ENCODE measurements at regions of chr12 and their contacts with region 1.

Region 1: DNA sequence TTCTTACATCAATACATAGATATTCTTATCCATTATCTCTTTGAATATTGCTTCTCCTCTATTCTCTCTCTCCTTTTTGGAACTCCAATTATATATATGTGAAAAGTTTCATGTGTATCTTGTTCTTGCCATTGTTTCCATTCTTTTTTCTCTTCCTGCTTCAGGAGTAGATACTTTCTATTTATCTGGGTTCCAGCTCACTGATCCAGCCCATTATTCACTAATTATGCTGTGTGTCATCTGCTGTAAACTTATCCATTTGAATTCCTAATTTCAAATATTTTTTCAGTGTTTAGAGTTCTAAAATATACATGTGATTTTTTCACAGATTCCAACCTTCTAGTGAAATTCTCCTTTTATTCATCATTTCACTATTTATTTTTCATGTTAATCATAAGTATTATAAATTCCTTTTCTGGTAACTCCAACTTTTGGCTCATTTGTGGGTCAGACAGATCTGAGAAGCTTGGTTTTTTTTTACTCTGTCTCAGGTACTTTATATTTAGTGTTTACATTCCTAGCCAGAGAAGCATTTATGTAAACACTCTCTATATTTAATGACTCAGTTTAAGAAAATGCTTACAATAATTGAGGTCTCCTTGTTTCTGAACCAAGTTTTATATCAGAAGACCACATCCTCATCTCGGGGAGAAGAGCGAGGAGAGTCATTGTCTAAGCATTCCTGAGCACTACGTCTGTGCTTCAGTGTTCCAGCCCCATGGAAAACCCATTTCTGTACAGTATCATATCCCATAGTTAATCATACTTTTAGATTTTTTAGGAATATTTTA is 15.9 kb upstream of the AMIGO2 start:
- DNase-seq: peak in 1 of 2 experiments; percentile 91
- ATAC-seq: peak; percentile 77 to 90
- H3K4me3 ChIP-seq: peak overlapping the region; percentile 3; the same call in 1 of the 3 replicates
- H3K27ac ChIP-seq: peak overlapping the region; percentile 91
- H3K4me1 ChIP-seq: peaks cover 80% of the 10 kb centered on the region
- CTCF ChIP-seq: no peak
- EP300 ChIP-seq: peak; percentile 85 to 89; a peak in 4 of 5 replicates
- POLR2A ChIP-seq: no peak
- RAD21 ChIP-seq: peak; percentile 39 to 52

Region 2: DNA sequence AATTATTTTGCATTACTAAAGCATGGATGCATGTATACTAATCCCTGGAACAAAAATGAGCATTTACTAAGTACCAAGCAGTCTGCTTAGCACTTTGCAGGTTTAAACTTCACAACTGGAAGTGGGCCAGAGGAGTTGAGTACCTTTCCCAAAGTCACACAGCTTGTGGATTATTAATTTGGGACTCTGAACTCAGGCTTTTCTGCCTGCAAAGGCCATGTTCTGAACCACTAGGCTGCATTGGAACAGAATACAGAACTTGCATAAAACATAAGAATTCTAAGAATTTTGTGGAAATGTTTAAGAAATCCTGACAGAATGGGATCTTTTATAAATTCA is 117.0 kb after region 1 on chr12:
- CTCF ChIA-PET with region 1: interaction called, 3 read pairs
- POLR2A ChIA-PET with region 1: interaction called, 30 read pairs
- DNase-seq: no peak
- ATAC-seq: no peak; a peak in 1 of 6 replicates
- H3K4me3 ChIP-seq: no peak overlapping the region
- H3K27ac ChIP-seq: peak overlapping the region; percentile 91 to 92
- H3K4me1 ChIP-seq: peaks cover 78% of the 10 kb centered on the region
- CTCF ChIP-seq: no peak
- EP300 ChIP-seq: no peak
- POLR2A ChIP-seq: no peak
- RAD21 ChIP-seq: no peak; a peak in 1 of 5 replicates

Region 3: DNA sequence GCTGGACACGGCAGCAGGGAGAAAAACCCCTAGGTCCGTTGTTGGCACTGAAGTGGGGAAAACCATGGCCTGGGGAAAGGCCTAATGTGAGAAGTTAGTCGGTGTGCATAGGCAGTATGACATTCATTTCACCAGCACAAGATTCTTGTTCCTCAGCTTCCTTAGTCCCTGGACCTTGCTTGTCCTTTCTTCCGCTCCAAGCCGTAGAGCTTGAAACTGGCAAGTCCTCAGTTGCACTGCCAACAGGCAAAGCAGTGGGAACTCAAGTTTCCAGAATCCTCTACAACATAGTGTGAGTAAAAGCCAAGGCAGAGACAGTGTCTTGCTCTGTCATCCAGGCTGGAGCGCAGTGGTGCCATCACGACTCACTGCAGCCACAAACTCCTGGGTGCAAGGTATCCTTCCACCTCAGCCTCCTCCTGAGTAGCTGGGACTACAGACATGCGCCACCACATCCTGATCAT is 122.6 kb after region 1 on chr12:
- CTCF ChIA-PET with region 1: interaction called, 3 read pairs
- POLR2A ChIA-PET with region 1: interaction called, 27 read pairs
- DNase-seq: no peak
- ATAC-seq: no peak
- H3K4me3 ChIP-seq: no peak overlapping the region
- H3K27ac ChIP-seq: peak overlapping the region; percentile 98 to 99
- H3K4me1 ChIP-seq: peaks cover 76% of the 10 kb centered on the region
- CTCF ChIP-seq: no peak
- EP300 ChIP-seq: no peak
- POLR2A ChIP-seq: no peak
- RAD21 ChIP-seq: no peak

Region 4: GRCh38 chr12:47223848-47224213 is 128.2 kb after region 1 on chr12:
- CTCF ChIA-PET with region 1: interaction called, 3 read pairs
- POLR2A ChIA-PET with region 1: interaction called, 27 read pairs
- DNase-seq: peak in 1 of 2 experiments; percentile 95
- ATAC-seq: peak; percentile 65 to 73
- H3K4me3 ChIP-seq: peak overlapping the region; percentile 44
- H3K27ac ChIP-seq: peak overlapping the region; percentile 98 to 99
- H3K4me1 ChIP-seq: peaks cover 83% of the 10 kb centered on the region
- CTCF ChIP-seq: no peak
- EP300 ChIP-seq: peak in 1 of 2 experiments; percentile 17; a peak in 1 of 5 replicates
- POLR2A ChIP-seq: no peak
- RAD21 ChIP-seq: peak; percentile 24 to 34; a peak in 2 of 5 replicates

Measured in A549 (cell line).